Natural killer cell (primary cell): ENCODE measurements at regions of chr11 and their contacts with region 1.

Region 1: DNA sequence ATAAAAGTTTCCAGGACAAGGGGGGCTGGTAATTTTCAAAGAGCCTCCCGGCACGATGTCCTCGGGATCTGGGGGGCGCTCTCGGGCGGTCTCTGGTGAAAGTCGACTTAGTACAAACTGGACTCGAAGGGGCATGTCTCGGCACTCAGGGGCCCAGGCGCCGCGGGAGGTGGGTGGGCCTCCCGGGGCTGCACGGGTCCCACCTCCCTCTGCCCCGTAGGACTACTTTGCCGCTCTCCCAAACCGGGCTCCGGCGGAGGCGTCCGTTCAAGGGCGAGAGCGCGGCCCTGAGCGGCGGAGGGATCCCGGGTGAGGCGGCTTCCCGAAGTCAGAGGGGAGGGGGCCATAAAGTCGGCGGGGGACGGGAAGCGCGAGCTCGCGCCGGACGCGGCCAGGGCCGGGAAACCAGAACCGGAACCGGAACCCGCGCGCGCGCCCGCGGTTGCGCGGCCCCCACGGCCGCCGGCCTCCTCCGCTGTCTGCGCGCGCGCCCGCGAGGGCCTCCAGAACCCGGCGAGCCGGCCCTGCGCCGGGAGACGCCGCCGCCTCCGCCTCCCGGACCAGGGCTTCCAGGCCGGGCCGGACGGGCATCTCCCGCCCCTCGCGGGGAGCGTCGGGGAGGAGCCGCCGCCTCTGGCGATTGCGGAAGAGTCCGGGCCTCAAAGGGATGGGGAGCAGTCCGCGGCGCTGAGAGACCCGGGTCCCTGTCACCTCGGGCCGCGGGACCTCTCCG is at the start of gene ARHGEF12:
- DNase-seq: peak; percentile 75 to 86
- ATAC-seq: peak; percentile 64 to 83 (median 77)
- H3K4me3 ChIP-seq: peak within 1 kb of the TSS; percentile 78
- H3K4me3 Mint-ChIP-seq: peak within 1 kb of the TSS; percentile 96
- H3K27ac ChIP-seq: peak within 1 kb of the TSS; percentile 38
- H3K27ac Mint-ChIP-seq: peak within 1 kb of the TSS; percentile 80 to 84
- H3K4me1 ChIP-seq: peaks cover 19% of the 10 kb centered on the region
- H3K4me1 Mint-ChIP-seq: peaks cover 42 to 43% of the 10 kb centered on the region in 2 donors
- H3K27me3 ChIP-seq: peaks cover 27% of the 10 kb centered on the region
- H3K27me3 Mint-ChIP-seq: peaks cover 32 to 61% of the 10 kb centered on the region in 2 donors
- CTCF ChIP-seq: no peak
- total RNA-seq, gene ARHGEF12: 38.4 to 52.3 (median 42.1) TPM

Region 2: GRCh38 chr11:120467627-120468026 is 131.6 kb after region 1 on chr11:
- intact Hi-C with region 1: loop called (anchors 5 kb)
- DNase-seq: no peak
- ATAC-seq: no peak
- H3K4me3 ChIP-seq: no peak overlapping the region
- H3K4me3 Mint-ChIP-seq: no peak overlapping the region
- H3K27ac ChIP-seq: no peak overlapping the region
- H3K27ac Mint-ChIP-seq: no peak overlapping the region
- H3K4me1 ChIP-seq: no peaks in the 10 kb centered on the region
- H3K4me1 Mint-ChIP-seq: peaks cover 10 to 13% of the 10 kb centered on the region in 2 donors
- H3K27me3 ChIP-seq: no peaks in the 10 kb centered on the region
- H3K27me3 Mint-ChIP-seq: no peaks in the 10 kb centered on the region
- CTCF ChIP-seq: no peak

Region 3: DNA sequence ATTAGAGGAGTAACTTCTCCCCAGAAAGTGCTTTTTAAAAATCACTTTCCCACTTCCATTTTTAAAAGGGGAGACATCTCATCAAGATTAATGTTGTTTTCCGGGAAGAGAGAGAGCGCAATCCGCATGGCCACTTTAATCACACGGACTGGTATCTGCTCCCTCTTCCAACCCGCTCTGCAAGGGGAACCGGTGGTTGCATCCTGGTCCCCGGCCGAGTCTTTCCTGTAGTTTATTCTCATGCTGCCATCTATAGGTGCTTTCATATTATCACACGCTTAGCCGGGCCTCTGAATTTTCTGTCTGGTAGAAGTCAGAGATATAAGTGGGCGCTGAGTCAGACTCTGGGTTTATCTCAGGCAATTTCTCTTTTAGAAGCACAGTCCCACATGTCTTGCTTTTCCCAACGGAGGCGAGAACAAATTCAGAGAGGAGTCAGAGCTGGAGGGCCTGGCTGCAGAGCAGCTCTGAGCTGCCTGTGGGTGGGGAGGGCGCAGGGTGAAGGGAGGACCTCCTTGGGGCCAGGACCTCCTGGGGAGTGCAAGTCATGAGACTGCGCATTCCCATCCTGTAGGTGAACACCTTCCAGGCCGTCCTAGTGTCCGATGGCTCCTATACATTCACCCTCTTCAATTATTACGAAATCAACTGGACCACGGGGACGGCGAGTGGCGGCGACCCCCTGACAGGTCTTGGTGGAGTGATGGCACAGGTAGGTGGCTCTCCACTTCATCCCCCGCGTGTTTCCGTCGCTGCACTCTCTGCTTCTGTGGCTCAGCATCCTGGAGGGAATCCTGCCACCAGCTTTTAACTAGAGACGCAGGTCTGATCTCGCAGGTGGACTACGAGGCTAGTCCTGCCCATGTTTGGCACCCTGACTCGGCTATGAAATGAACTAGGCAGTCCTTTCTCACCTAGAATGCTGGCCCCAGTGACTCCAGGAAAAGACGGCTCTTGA is 776.7 kb after region 1 on chr11:
- intact Hi-C with region 1: loop called (anchors 5 kb)
- DNase-seq: peak; percentile 21 to 48
- ATAC-seq: peak; percentile 60 to 75 (median 73)
- H3K4me3 ChIP-seq: no peak overlapping the region
- H3K4me3 Mint-ChIP-seq: no peak overlapping the region
- H3K27ac ChIP-seq: no peak overlapping the region
- H3K27ac Mint-ChIP-seq: no peak overlapping the region
- H3K4me1 ChIP-seq: no peaks in the 10 kb centered on the region
- H3K4me1 Mint-ChIP-seq: peaks cover 0 to 14% of the 10 kb centered on the region in 2 donors
- H3K27me3 ChIP-seq: no peaks in the 10 kb centered on the region
- H3K27me3 Mint-ChIP-seq: peaks cover 16 to 36% of the 10 kb centered on the region in 2 donors
- CTCF ChIP-seq: peak; percentile 59

Region 4: GRCh38 chr11:121194731-121195596 is 858.9 kb after region 1 on chr11:
- intact Hi-C with region 1: loop called (anchors 2 kb)
- DNase-seq: peak; percentile 28 to 83
- ATAC-seq: peak; percentile 86 to 92 (median 88)
- H3K4me3 ChIP-seq: no peak overlapping the region
- H3K4me3 Mint-ChIP-seq: no peak overlapping the region
- H3K27ac ChIP-seq: no peak overlapping the region
- H3K27ac Mint-ChIP-seq: no peak overlapping the region
- H3K4me1 ChIP-seq: no peaks in the 10 kb centered on the region
- H3K4me1 Mint-ChIP-seq: peaks cover 0 to 6% of the 10 kb centered on the region in 2 donors
- H3K27me3 ChIP-seq: peaks cover 6% of the 10 kb centered on the region
- H3K27me3 Mint-ChIP-seq: peaks cover 26 to 35% of the 10 kb centered on the region in 2 donors
- CTCF ChIP-seq: peak; percentile 89